PC-3 (cell line): ENCODE measurements at regions of chr2 and their contacts with region 1.

Region 1: DNA sequence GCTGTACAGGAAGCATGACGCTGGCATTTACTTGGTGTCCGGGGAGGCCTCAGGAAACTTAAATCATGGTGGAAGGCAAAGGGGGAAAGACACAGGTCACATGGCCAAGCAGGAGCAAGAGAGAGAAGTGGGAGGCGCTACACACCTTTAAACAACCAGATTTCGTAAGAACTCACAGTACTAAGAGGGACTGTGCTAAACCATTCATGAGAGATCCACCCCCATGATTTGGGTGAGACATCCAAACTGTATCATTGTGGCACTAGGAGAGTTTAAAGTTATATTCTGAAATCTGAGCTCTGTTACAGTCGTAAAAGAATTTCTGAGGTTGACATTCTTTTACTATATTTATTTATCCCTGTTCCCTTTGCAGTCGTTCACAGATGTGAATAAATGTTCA is 116.6 kb downstream of the ICA1L start:
- DNase-seq: peak; percentile 7
- ATAC-seq: peak; percentile 92
- H3K4me3 ChIP-seq: no peak overlapping the region
- H3K27ac ChIP-seq: no peak overlapping the region
- H3K4me1 ChIP-seq: peaks cover 12% of the 10 kb centered on the region; the same call in 1 of the 2 replicates
- H3K27me3 ChIP-seq: no peaks in the 10 kb centered on the region
- CTCF ChIP-seq: no peak

Region 2: GRCh38 chr2:202299712-202300111 is 455.2 kb before region 1 on chr2:
- CTCF ChIA-PET with region 1: no interaction called
- POLR2A ChIA-PET with region 1: no interaction called
- intact Hi-C with region 1: no loop called
- DNase-seq: no peak
- ATAC-seq: no peak
- H3K4me3 ChIP-seq: no peak overlapping the region
- H3K27ac ChIP-seq: no peak overlapping the region
- H3K4me1 ChIP-seq: peaks cover 6% of the 10 kb centered on the region; the same call in 1 of the 2 replicates
- H3K27me3 ChIP-seq: no peaks in the 10 kb centered on the region
- CTCF ChIP-seq: no peak

Region 3: DNA sequence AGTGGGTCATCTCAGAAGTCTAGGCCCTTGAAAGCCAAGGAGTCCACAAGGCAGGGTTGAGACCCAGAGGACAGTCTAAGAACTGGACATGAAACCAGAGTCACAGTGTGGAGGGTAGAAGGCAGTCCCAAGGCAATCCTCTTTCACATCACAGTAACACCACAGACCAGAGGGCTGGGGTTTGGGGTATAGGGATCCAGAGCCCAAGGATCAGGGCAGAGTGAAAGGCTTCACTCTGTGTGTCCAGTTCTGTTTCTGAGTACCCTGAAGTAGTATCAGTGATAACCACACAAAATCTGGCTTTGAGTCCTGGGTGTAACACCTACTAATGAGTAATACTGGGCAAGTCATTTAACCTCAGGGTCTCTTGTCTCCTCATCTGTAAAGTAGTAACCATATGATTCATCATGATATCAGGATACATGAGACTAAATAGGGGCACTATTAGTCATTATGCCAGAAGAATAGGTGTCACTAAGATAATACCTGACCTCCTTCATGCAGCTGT is 25.6 kb after region 1 on chr2:
- CTCF ChIA-PET with region 1: no interaction called
- POLR2A ChIA-PET with region 1: no interaction called
- intact Hi-C with region 1: loop called (anchors 2 kb)
- DNase-seq: peak; percentile 91
- ATAC-seq: peak; percentile 92
- H3K4me3 ChIP-seq: no peak overlapping the region
- H3K27ac ChIP-seq: peak overlapping the region; percentile 53
- H3K4me1 ChIP-seq: peaks cover 14% of the 10 kb centered on the region
- H3K27me3 ChIP-seq: no peaks in the 10 kb centered on the region
- CTCF ChIP-seq: no peak